Activated T-helper 2 cell treated with anti-CD3 and anti-CD28 coated beads, Interferon-gamma antibody, Interleukin-2, Interleukin-4, amounts not matched to agents 10 μg/mL and 5 μg/mL and 100 μg/mL, durations not matched to agents 14 hours and 24 hours and 36 hours (primary cell): ENCODE measurements at regions of chr12 and their contacts with region 1.

Region 1: GRCh38 chr12:95529787-95530186 is 21.5 kb downstream of the USP44 start:
- DNase-seq: no peak
- H3K4me3 Mint-ChIP-seq: no peak overlapping the region
- H3K27ac Mint-ChIP-seq: no peak overlapping the region
- H3K4me1 Mint-ChIP-seq: peaks cover 5% of the 10 kb centered on the region
- H3K27me3 Mint-ChIP-seq: no peaks in the 10 kb centered on the region

Region 2: GRCh38 chr12:95497031-95497430 is 32.8 kb before region 1 on chr12:
- intact Hi-C with region 1: no loop called
- DNase-seq: no peak
- H3K4me3 Mint-ChIP-seq: no peak overlapping the region
- H3K27ac Mint-ChIP-seq: no peak overlapping the region
- H3K4me1 Mint-ChIP-seq: peaks cover 2% of the 10 kb centered on the region
- H3K27me3 Mint-ChIP-seq: no peaks in the 10 kb centered on the region

Region 3: DNA sequence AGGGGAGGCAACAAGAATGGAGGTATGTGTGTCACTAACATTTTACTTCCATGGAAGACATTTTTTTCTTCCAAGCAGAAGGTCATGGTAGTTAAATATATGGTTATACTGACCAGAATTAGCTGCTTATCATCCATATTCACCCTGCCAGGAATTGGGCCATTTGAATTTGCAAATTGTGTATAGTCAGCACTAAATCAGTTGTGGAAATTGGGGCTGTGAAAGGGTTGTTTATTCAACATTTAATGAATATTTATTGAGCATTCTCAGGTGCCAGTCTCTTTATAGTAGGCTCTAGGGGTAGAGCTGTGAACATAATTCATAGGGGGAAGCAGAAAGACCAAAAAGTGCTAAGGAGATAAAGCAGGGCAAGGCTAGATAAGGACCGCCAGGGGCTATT is 17.8 kb before region 1 on chr12:
- intact Hi-C with region 1: loop called (anchors 2 kb)
- DNase-seq: no peak
- H3K4me3 Mint-ChIP-seq: no peak overlapping the region
- H3K27ac Mint-ChIP-seq: no peak overlapping the region
- H3K4me1 Mint-ChIP-seq: peaks cover 6% of the 10 kb centered on the region
- H3K27me3 Mint-ChIP-seq: no peaks in the 10 kb centered on the region